ENCODE measurements at regions of chr1 and their contacts with region 1.

Region 1: DNA sequence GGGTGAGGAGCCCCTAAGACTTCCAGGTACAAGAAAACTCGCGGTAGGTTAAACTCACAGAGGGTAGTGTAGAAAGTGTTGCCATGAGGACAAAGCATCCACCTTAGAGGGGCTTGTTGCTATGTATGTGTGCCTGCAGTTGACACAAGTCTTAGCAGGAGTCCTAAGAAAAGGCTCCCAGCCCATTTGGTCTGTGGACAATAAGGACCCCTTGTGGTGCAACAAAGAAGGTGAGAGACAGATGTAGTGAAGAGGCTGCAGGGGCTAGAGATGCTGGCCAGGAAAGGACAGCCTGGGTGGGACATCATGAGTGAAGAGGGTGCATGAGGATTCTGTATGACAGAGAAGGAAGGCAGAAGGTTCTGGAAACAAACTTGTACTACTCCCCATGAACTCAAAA is 36.3 kb upstream of the IL10 start:
- DNase-seq: peak in 2 of 7 donors; percentile 36 to 57
- H3K4me3 ChIP-seq: no peak overlapping the region
- H3K27ac ChIP-seq: no peak overlapping the region
- H3K4me1 ChIP-seq: no peaks in the 10 kb centered on the region
- H3K27me3 ChIP-seq: no peaks in the 10 kb centered on the region
- CTCF ChIP-seq: peak in 5 of 6 experiments; percentile 19 to 46 (median 42)
- POLR2A ChIP-seq: no peak

Region 2: DNA sequence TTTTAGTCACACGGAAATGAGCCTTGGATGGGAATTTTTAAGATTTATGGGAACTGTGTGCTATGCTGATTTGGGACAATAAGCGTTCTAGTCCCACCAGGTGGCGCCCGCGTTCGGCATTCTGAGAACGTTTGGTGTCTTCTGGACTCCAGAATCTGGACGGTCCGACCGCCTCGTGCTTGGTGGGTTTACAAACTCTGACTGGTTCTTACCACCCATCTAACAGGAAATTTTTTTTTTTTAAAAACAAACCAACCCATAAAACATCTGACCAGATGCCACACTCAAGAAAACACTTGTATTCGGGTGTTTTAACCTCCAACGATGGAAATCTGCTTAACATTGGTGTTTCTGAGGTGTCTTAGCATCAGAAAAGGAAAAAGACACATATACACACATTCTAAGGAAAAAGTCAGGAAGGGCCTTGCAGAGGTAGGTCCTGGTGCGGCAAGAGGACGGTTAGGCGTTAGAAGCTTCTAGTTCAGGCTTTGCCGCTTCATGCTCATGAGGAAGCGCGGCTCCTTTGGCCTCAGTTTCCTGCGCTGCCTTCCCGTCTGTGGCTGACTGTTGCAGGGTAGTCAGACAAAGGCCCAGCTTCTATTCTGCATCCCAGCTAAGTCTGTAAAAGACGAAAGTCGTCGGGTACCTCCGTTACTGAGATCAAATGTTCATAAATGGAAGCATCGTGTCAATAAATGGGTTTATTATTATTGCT is 174.1 kb before region 1 on chr1:
- intact Hi-C with region 1: no loop called
- DNase-seq: peak; percentile 92 to 98 (median 98)
- H3K4me3 ChIP-seq: peak overlapping the region in 2 of 4 donors; percentile 80 to 97
- H3K27ac ChIP-seq: peak overlapping the region in 3 of 5 donors; percentile 44 to 85 (median 81)
- H3K4me1 ChIP-seq: peaks cover 8 to 28% of the 10 kb centered on the region in 2 donors
- H3K27me3 ChIP-seq: no peaks in the 10 kb centered on the region
- CTCF ChIP-seq: peak; percentile 76 to 91 (median 87)
- POLR2A ChIP-seq: no peak

Region 3: DNA sequence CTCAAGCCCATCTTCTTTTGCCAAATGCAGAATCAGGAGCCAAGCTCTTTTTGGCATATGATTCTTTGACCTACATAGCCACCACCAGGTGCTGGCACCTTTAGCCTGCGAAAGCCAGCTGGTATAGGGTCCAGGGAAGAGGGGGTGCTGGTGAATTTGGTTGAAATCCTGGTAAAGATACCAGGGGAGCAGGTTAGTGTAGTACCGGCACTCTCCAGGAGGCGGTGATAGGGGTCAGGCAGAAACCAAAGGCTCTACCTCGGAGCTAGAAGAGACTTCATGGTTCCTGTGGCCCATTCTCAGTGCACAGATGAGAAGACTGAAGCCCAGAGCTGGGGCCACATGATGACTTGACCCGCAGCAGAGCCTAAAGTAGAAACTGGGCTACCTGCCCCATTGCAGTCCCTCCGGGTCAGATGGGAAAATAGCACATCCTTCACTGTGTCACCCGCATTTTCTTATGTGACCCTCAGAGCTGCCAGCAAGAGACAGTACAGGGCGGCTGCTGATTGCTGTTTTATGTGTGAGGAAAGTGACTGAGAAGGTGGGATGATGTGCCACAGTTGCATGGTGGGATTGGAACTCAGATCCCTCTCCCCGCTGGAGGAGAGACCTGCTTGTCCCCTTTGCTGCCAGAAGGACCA is 74.0 kb before region 1 on chr1:
- intact Hi-C with region 1: loop called in 1 of 2 experiments (anchors 10 kb)
- DNase-seq: peak in 4 of 7 donors; percentile 46 to 84 (median 69)
- H3K4me3 ChIP-seq: no peak overlapping the region
- H3K27ac ChIP-seq: peak overlapping the region in 1 of 5 donors; percentile 1
- H3K4me1 ChIP-seq: peaks cover 7 to 14% of the 10 kb centered on the region in 2 donors
- H3K27me3 ChIP-seq: no peaks in the 10 kb centered on the region
- CTCF ChIP-seq: peak; percentile 60 to 72 (median 66)
- POLR2A ChIP-seq: no peak

Region 4: GRCh38 chr1:206941858-206942387 is 133.3 kb after region 1 on chr1:
- intact Hi-C with region 1: no loop called
- DNase-seq: no peak
- H3K4me3 ChIP-seq: no peak overlapping the region
- H3K27ac ChIP-seq: no peak overlapping the region
- H3K4me1 ChIP-seq: no peaks in the 10 kb centered on the region
- H3K27me3 ChIP-seq: no peaks in the 10 kb centered on the region
- CTCF ChIP-seq: no peak
- POLR2A ChIP-seq: no peak

Region 5: DNA sequence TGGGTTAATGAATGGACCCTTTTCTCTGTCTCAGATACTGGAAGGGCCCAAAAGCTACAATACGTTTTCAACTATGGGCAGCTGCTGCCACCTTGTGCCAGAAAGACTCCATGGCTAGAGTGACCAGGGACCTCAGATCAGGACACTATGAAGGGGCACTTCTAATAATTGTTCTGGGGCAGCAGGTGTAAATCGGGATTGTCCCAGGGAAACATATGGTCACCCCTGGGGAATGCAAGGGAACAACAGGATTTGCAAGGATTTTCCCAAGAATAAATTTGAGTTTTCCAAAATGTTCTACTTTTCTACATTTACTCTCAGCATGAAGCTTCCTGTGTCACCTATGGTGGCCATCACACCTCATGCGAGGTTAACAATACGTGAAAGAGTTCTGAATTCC is 173.6 kb after region 1 on chr1:
- intact Hi-C with region 1: no loop called
- DNase-seq: peak; percentile 49 to 80 (median 56)
- H3K4me3 ChIP-seq: no peak overlapping the region
- H3K27ac ChIP-seq: no peak overlapping the region
- H3K4me1 ChIP-seq: no peaks in the 10 kb centered on the region
- H3K27me3 ChIP-seq: no peaks in the 10 kb centered on the region
- CTCF ChIP-seq: peak; percentile 29 to 70 (median 60)
- POLR2A ChIP-seq: no peak

Region 6: DNA sequence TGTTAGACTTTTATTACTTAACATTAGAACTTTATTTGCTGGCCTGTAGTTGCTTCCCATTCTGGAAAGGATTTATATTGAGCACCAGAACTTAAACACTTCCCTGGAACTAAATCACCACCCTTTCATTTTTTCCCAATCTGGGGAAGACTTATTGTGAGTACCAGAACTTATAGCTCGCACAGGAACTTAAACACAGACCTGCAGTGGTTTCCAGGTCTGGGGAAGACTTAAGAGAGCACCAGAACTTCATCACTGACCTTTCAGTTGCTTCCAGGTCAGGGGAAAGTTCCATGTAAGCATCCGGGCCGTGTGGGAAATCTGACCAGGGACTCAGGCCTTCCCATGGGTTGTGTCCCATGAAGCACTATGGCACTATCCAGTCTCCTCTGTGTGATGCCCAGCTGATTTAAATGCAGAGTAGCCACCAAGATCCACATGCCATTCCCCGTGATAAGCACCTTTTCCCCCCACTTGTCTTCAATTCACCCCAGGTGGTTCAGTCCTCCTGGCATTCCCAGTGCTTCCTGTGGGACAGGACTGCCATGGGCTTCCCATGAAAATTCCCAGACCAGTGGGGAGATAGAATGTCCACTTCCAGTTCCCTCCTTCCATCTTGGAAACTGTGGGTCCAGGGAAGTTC is 344.3 kb after region 1 on chr1:
- intact Hi-C with region 1: no loop called
- DNase-seq: no peak
- H3K4me3 ChIP-seq: no peak overlapping the region
- H3K27ac ChIP-seq: no peak overlapping the region
- H3K4me1 ChIP-seq: no peaks in the 10 kb centered on the region
- H3K27me3 ChIP-seq: no peaks in the 10 kb centered on the region
- CTCF ChIP-seq: no peak
- POLR2A ChIP-seq: no peak

Measured in adrenal gland (tissue), 19 donors.